ENCODE measurements at regions of chr20 and their contacts with region 1.

Region 1: GRCh38 chr20:768426-768978 is at the start of gene SLC52A3:
- DNase-seq: peak; percentile 20
- H3K4me3 ChIP-seq: no peak within 1 kb of the TSS
- H3K27ac ChIP-seq: no peak within 1 kb of the TSS
- H3K4me1 ChIP-seq: no peaks in the 10 kb centered on the region
- H3K27me3 ChIP-seq: no peaks in the 10 kb centered on the region
- CTCF ChIP-seq: peak; percentile 14 to 52
- total RNA-seq, gene SLC52A3: not detected

Region 2: GRCh38 chr20:694496-694895 is 74.0 kb before region 1 on chr20:
- CTCF ChIA-PET with region 1: no interaction called
- dilution Hi-C with region 1: loop called (anchors 5 kb)
- in situ Hi-C with region 1: no loop called
- intact Hi-C with region 1: no loop called
- DNase-seq: no peak
- H3K4me3 ChIP-seq: no peak overlapping the region
- H3K27ac ChIP-seq: no peak overlapping the region
- H3K4me1 ChIP-seq: no peaks in the 10 kb centered on the region
- H3K27me3 ChIP-seq: peaks cover 2% of the 10 kb centered on the region
- CTCF ChIP-seq: no peak